Activated CD8-positive, alpha-beta memory T cell treated with anti-CD3 and anti-CD28 coated beads, Interleukin-2, amount 10 ng/mL, durations not matched to agents 7 days and 5 days (primary cell): ENCODE measurements at regions of chr12 and their contacts with region 1.

Region 1: GRCh38 chr12:54749191-54749818 is 101.1 kb upstream of the DCD start:
- DNase-seq: peak; percentile 53
- ATAC-seq: peak; percentile 96
- H3K4me3 Mint-ChIP-seq: peak overlapping the region; percentile 39
- H3K27ac Mint-ChIP-seq: peak overlapping the region; percentile 67
- H3K4me1 Mint-ChIP-seq: peaks cover 21% of the 10 kb centered on the region
- H3K27me3 Mint-ChIP-seq: peaks cover 5% of the 10 kb centered on the region

Region 2: DNA sequence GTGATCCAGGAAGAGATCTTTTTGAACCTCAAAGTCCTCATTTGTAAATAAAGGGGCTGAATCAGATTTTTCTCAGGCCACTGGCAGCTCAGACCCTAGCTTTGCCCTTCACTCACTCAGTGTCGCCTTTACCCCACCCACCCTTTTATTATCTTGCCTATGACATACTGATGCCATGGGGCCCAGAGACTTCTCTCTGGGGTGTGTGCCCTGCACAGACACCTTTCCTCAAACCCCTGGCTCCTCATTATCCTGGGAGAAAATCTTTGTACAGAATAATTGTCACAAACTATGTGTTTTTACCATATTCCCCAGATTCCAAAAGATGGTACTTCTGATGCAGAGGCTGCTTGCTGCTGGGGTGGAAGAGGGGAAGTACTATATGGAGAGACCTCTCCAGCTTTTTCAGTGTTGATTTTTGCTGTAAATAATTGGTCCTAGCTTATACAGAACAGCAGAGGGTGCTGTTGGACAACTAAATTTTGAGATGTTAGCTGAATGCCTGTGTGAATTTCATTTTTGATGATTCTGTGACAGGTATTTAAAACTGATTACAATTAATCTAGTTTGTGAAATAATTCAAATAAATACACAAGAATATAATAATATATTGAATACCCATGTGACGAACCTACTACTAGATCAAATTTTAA is 47.2 kb before region 1 on chr12:
- CTCF ChIA-PET with region 1: interaction called, 12 read pairs
- DNase-seq: no peak
- ATAC-seq: peak; percentile 51
- H3K4me3 Mint-ChIP-seq: no peak overlapping the region
- H3K27ac Mint-ChIP-seq: no peak overlapping the region
- H3K4me1 Mint-ChIP-seq: no peaks in the 10 kb centered on the region
- H3K27me3 Mint-ChIP-seq: peaks cover 19% of the 10 kb centered on the region

Region 3: DNA sequence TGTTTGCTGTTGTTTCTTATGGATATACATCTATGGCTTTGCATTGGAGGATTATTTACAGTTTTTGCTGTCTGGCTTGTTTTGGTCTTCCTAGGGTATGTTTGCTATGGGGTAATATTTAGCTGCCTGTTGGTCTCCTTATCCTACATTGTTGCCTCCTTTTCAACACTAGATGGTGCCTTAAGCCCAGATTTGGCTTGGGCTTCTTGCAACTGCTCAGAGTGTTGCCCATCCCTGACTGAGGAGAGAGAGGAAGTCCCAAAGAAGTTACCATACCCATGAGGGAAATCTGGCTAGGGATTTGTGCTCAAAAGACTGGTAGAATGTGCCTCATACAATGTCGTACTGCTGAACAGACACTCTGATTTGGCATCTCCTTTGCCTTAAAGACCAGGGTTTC is 10.4 kb after region 1 on chr12:
- CTCF ChIA-PET with region 1: interaction called, 20 read pairs
- DNase-seq: no peak
- ATAC-seq: peak; percentile 61
- H3K4me3 Mint-ChIP-seq: no peak overlapping the region
- H3K27ac Mint-ChIP-seq: no peak overlapping the region
- H3K4me1 Mint-ChIP-seq: peaks cover 8% of the 10 kb centered on the region
- H3K27me3 Mint-ChIP-seq: peaks cover 4% of the 10 kb centered on the region

Region 4: GRCh38 chr12:54879150-54879549 is 129.8 kb after region 1 on chr12:
- CTCF ChIA-PET with region 1: no interaction called
- DNase-seq: no peak
- ATAC-seq: no peak
- H3K4me3 Mint-ChIP-seq: no peak overlapping the region
- H3K27ac Mint-ChIP-seq: no peak overlapping the region
- H3K4me1 Mint-ChIP-seq: peaks cover 4% of the 10 kb centered on the region
- H3K27me3 Mint-ChIP-seq: peaks cover 14% of the 10 kb centered on the region

Region 5: GRCh38 chr12:54935235-54935951 is 186.1 kb after region 1 on chr12:
- CTCF ChIA-PET with region 1: interaction called, 11 read pairs
- DNase-seq: peak; percentile 63
- ATAC-seq: peak; percentile 98
- H3K4me3 Mint-ChIP-seq: peak overlapping the region; percentile 48
- H3K27ac Mint-ChIP-seq: peak overlapping the region; percentile 99
- H3K4me1 Mint-ChIP-seq: peaks cover 41% of the 10 kb centered on the region
- H3K27me3 Mint-ChIP-seq: no peaks in the 10 kb centered on the region

Region 6: DNA sequence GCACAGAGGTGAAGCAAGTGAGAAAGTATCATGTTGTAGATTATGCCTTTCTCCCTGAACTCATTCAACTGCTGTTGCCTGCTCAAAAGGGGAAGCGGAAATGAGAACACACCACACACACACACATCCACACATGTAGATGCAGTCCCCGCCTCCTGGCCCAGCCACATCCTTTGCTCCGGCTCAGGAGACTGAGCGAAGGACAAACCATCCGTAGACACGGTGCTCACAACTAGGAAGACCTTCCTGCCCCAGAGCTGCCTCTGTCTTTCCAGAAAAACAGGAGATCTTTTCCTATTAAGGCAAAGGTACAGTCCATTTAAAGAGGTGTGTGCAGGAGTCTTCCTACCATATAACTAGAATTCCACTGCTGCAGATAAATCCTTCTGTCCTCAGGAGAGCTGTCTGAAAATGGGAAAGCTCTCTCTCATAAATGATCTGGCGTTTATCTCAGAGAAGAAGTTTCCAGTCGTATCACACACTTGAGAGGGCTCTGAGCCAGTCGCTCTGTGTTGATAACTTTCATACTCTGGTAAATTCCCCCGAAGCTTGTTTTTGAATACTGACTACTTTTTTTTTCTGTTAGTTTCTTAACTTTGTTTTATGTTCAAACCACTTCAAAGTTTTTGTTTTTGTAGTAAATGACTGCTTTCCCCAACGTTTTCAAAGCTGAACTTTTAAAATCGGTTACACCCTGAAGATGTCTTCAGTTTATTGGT is 235.5 kb after region 1 on chr12 and contains the start of gene TESPA1:
- CTCF ChIA-PET with region 1: interaction called, 12 read pairs
- DNase-seq: peak; percentile 94
- ATAC-seq: peak; percentile 95
- H3K4me3 Mint-ChIP-seq: peak within 1 kb of the TSS; percentile 93
- H3K27ac Mint-ChIP-seq: peak within 1 kb of the TSS; percentile 83
- H3K4me1 Mint-ChIP-seq: peaks cover 62% of the 10 kb centered on the region
- H3K27me3 Mint-ChIP-seq: no peaks in the 10 kb centered on the region
- total RNA-seq, gene TESPA1: 65.9 to 74.6 TPM

Region 7: DNA sequence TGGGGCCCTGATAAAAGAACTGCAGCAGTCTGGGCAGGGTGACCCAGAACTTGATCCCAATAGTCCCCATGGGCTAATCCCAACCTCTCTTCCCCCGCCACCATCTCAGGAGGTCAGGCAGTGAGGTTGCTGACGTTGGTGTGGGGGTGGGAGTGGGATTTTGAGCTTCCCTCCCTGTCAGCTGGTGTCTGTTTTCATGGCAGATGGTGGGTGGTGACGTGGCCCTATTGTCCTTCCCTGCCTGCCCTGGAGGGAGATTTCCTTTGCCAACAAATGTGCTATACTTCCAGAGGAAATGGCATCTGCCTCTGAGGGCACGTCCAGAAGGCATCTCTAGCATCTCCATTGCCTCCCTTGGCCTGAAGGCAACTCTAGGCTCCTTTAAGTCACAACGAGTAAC is 308.2 kb after region 1 on chr12:
- CTCF ChIA-PET with region 1: no interaction called
- DNase-seq: no peak
- ATAC-seq: no peak
- H3K4me3 Mint-ChIP-seq: no peak overlapping the region
- H3K27ac Mint-ChIP-seq: no peak overlapping the region
- H3K4me1 Mint-ChIP-seq: peaks cover 13% of the 10 kb centered on the region
- H3K27me3 Mint-ChIP-seq: peaks cover 5% of the 10 kb centered on the region